ENCODE measurements at regions of chr19 and their contacts with region 1.

Region 1: DNA sequence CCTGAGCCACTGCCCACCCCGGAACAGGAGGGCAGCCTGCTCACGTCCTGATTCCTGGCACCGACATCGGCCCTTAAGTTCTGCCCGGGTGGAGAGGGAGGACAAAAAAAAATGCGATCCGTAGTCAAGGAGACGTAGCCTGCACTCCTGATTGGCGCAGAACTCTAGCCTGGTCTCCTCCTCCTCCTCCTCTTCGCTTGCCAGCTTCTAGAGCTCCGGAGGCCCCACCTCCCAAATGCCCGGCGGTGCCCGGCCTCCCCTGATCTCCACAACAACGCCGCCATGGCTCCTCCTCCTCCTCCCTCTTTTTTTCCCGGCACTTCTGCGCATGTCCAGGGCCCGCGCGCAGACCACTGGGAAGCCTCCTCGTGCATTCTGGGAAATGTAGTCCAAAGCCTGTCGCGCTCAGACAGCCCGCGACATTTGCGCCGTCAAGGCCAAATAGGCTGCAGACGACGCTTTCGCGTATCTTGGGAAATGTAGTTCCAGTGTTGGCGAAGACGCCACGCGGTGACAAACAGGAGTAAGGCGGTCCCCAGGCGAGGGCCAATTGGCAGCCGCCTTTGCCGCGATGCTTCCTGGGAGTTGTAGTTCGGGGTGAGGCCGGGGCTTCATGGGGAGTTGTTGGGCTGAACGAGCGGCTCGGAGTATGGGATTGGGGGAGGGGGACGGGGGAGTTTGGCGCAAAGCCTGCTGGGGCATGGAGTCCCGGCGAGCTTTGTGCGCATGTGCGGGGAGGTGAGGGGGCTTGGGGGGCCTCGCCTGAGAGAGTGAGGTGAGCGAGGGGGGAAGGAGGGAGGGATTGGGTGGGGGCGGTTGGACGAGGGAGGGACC is at the start of gene ZNF444:
- DNase-seq: peak; percentile 93 to 100 (median 100)
- ATAC-seq: peak; percentile 91
- H3K4me3 ChIP-seq: peak within 1 kb of the TSS; percentile 60
- H3K4me3 Mint-ChIP-seq: peak within 1 kb of the TSS; percentile 88 to 97 (median 92)
- H3K27ac ChIP-seq: peak within 1 kb of the TSS; percentile 85
- H3K27ac Mint-ChIP-seq: peak within 1 kb of the TSS; percentile 84 to 98 (median 91)
- H3K4me1 ChIP-seq: peaks cover 4 to 22% of the 10 kb centered on the region in 2 donors
- H3K4me1 Mint-ChIP-seq: peaks cover 27 to 49% (median 43%) of the 10 kb centered on the region in 7 donors
- H3K27me3 ChIP-seq: no peaks in the 10 kb centered on the region
- H3K27me3 Mint-ChIP-seq: peaks cover 0 to 4% (median 0%) of the 10 kb centered on the region in 5 donors
- total RNA-seq, gene ZNF444: 22.2 to 49.6 (median 35.7) TPM

Region 2: DNA sequence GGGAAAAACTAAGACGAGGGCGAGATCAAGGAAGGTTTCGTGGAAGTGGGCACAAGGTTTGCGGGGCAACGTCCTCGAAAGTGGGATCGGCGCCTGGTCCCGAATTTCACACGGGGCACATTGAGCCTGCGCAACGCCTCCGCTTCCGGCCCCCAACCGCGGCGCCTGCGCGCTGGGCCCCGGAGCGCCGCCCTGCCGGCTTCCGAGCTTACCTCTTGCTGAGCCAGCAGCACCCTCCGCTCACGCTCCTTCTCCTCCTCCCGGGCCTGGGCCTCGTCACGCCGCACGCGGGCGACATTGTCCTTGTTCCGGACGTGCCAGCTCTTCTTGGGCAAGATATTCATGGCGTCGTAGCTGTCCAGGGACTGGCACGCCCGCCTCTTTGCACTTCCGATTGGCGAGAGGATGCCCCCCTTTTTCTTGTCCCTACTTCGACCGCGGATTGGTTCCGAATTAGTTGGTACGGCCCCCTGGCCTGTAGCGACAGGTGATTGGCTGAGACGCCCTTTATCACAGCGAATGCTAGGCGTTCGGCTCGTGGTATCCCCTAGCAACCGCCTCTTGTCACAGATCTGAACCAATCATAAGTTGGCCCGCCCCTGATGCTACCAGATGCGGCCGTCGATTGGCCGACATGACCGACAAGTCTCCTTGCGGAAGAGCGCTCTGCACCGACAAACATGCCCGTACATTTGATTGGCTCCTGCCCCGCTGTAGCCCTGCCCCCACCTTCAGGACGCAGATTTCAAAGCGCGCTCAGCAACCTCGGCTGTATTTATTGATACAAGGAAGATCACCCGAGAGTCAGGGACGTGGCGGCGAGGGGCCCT is 1981.2 kb before region 1 on chr19 and contains the start of gene LENG1:
- CTCF ChIA-PET with region 1: no interaction called
- POLR2A ChIA-PET with region 1: no interaction called
- intact Hi-C with region 1: loop called in 1 of 2 experiments (anchors 1 kb)
- DNase-seq: peak; percentile 80 to 100 (median 99)
- ATAC-seq: peak; percentile 91
- H3K4me3 ChIP-seq: peak within 1 kb of the TSS; percentile 78
- H3K4me3 Mint-ChIP-seq: peak within 1 kb of the TSS; percentile 91 to 100 (median 98)
- H3K27ac ChIP-seq: peak within 1 kb of the TSS; percentile 87
- H3K27ac Mint-ChIP-seq: peak within 1 kb of the TSS; percentile 95 to 100 (median 99)
- H3K4me1 ChIP-seq: peaks cover 35 to 53% of the 10 kb centered on the region in 2 donors
- H3K4me1 Mint-ChIP-seq: peaks cover 47 to 88% (median 65%) of the 10 kb centered on the region in 7 donors
- H3K27me3 ChIP-seq: no peaks in the 10 kb centered on the region
- H3K27me3 Mint-ChIP-seq: no peaks in the 10 kb centered on the region
- total RNA-seq, gene LENG1: 7.1 to 20.4 (median 11.8) TPM

Region 3: GRCh38 chr19:55407800-55408532 is 732.8 kb before region 1 on chr19:
- CTCF ChIA-PET with region 1: no interaction called
- POLR2A ChIA-PET with region 1: no interaction called
- intact Hi-C with region 1: loop called in 1 of 2 experiments (anchors 2 kb)
- DNase-seq: peak; percentile 94 to 99 (median 97)
- ATAC-seq: peak; percentile 93
- H3K4me3 ChIP-seq: peak overlapping the region; percentile 89
- H3K4me3 Mint-ChIP-seq: peak overlapping the region; percentile 86 to 97 (median 92)
- H3K27ac ChIP-seq: peak overlapping the region; percentile 96
- H3K27ac Mint-ChIP-seq: peak overlapping the region; percentile 93 to 100 (median 99)
- H3K4me1 ChIP-seq: peaks cover 17 to 24% of the 10 kb centered on the region in 2 donors
- H3K4me1 Mint-ChIP-seq: peaks cover 21 to 36% (median 26%) of the 10 kb centered on the region in 7 donors
- H3K27me3 ChIP-seq: no peaks in the 10 kb centered on the region
- H3K27me3 Mint-ChIP-seq: peaks cover 0 to 12% (median 0%) of the 10 kb centered on the region in 5 donors

Region 4: DNA sequence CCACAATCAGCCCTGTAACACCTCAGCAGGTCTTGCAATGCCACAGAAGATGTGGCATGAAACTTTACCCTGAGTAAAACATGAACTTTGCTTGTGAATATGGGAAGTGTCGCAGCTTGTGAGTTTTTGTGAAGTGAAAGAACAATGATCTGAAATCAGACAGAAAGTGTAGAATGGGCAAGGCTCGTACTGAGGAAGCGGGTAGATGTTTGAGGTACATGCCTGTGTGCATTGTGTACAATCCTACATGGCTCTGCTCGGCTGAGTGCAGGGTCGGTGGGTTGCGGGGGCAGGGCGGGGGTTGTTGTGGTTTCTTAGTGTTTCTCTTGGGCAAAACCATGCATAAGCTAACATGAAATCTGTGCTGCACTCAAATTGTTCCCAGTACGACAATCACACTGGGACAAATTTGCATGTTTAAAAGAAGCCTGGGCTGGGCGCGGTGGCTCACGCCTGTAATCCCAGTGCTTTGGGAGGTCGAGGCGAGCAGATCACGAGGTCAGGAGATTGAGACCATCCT is 209.7 kb before region 1 on chr19:
- CTCF ChIA-PET with region 1: no interaction called
- POLR2A ChIA-PET with region 1: no interaction called
- intact Hi-C with region 1: no loop called
- DNase-seq: no peak
- ATAC-seq: no peak
- H3K4me3 ChIP-seq: no peak overlapping the region
- H3K4me3 Mint-ChIP-seq: no peak overlapping the region
- H3K27ac ChIP-seq: no peak overlapping the region
- H3K27ac Mint-ChIP-seq: no peak overlapping the region
- H3K4me1 ChIP-seq: no peaks in the 10 kb centered on the region
- H3K4me1 Mint-ChIP-seq: no peaks in the 10 kb centered on the region
- H3K27me3 ChIP-seq: no peaks in the 10 kb centered on the region
- H3K27me3 Mint-ChIP-seq: peaks cover 0 to 10% (median 0%) of the 10 kb centered on the region in 5 donors

Region 5: GRCh38 chr19:56105090-56105701 is 35.6 kb before region 1 on chr19:
- CTCF ChIA-PET with region 1: interaction called, 3 read pairs
- POLR2A ChIA-PET with region 1: no interaction called
- intact Hi-C with region 1: loop called (anchors 2 to 5 kb)
- DNase-seq: peak; percentile 39 to 68 (median 55)
- ATAC-seq: peak; percentile 83
- H3K4me3 ChIP-seq: no peak overlapping the region
- H3K4me3 Mint-ChIP-seq: peak overlapping the region in 8 of 10 donors; percentile 26 to 71 (median 60)
- H3K27ac ChIP-seq: no peak overlapping the region
- H3K27ac Mint-ChIP-seq: peak overlapping the region in 4 of 9 donors; percentile 9 to 70 (median 62)
- H3K4me1 ChIP-seq: peaks cover 0 to 5% of the 10 kb centered on the region in 2 donors
- H3K4me1 Mint-ChIP-seq: peaks cover 22 to 49% (median 36%) of the 10 kb centered on the region in 7 donors
- H3K27me3 ChIP-seq: no peaks in the 10 kb centered on the region
- H3K27me3 Mint-ChIP-seq: no peaks in the 10 kb centered on the region

Region 6: DNA sequence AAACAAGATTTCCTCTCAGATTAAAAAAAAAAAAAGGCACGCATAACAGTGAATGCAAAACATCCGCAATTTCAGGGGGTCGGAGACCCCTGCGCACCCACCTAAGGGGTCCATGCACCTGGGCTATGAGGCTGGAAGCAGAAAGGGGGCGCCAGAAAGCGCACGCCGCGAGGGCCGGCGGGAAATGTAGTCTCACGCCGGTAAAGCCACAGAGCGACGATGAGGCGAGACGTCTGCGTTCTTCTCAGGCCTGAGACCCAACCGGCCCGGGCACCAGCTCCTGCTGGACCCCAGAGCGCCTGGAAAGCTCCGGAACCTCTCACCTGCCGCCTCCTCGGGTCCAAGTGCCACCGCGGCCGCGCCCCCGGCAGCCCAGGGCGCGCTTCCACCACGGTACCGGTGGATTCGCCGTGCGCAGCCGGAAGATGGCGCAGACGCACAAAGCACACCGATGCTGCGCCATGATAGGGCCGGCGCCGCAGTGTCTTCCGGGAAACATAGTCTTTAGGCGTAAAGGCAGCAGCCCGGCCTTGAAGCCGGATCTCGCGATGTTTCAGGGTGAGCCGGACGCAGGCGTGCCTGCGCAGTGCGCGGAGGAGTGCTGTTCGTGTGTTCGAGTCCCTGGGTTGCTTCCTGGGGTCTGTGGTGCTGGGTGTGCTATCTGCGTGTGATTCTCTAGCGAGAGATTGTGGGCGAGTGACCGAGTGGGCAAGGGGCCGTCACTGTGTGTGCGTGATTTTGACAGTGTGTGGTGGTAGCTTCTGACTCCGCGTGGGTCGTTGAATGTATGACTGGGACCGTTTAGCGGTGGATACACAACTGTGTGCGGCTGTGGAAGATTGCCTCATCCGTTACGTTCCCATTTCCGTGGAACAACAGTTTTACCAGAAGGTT is 252.6 kb after region 1 on chr19 and contains the start of gene ZNF582:
- CTCF ChIA-PET with region 1: no interaction called
- POLR2A ChIA-PET with region 1: no interaction called
- intact Hi-C with region 1: loop called (anchors 1 to 2 kb)
- DNase-seq: peak; percentile 79 to 94 (median 90)
- ATAC-seq: peak; percentile 98
- H3K4me3 ChIP-seq: peak within 1 kb of the TSS; percentile 90
- H3K4me3 Mint-ChIP-seq: peak within 1 kb of the TSS; percentile 89 to 99 (median 98)
- H3K27ac ChIP-seq: peak within 1 kb of the TSS; percentile 92
- H3K27ac Mint-ChIP-seq: peak within 1 kb of the TSS; percentile 91 to 99 (median 96)
- H3K4me1 ChIP-seq: peaks cover 3 to 5% of the 10 kb centered on the region in 2 donors
- H3K4me1 Mint-ChIP-seq: peaks cover 3 to 32% (median 10%) of the 10 kb centered on the region in 7 donors
- H3K27me3 ChIP-seq: no peaks in the 10 kb centered on the region
- H3K27me3 Mint-ChIP-seq: no peaks in the 10 kb centered on the region
- total RNA-seq, gene ZNF582: 1.7 to 7.6 (median 3.3) TPM

Region 7: GRCh38 chr19:56441206-56441792 is 300.5 kb after region 1 on chr19:
- CTCF ChIA-PET with region 1: no interaction called
- POLR2A ChIA-PET with region 1: no interaction called
- intact Hi-C with region 1: no loop called
- DNase-seq: no peak
- ATAC-seq: no peak
- H3K4me3 ChIP-seq: no peak overlapping the region
- H3K4me3 Mint-ChIP-seq: no peak overlapping the region
- H3K27ac ChIP-seq: no peak overlapping the region
- H3K27ac Mint-ChIP-seq: no peak overlapping the region
- H3K4me1 ChIP-seq: no peaks in the 10 kb centered on the region
- H3K4me1 Mint-ChIP-seq: no peaks in the 10 kb centered on the region
- H3K27me3 ChIP-seq: no peaks in the 10 kb centered on the region
- H3K27me3 Mint-ChIP-seq: no peaks in the 10 kb centered on the region

Region 8: DNA sequence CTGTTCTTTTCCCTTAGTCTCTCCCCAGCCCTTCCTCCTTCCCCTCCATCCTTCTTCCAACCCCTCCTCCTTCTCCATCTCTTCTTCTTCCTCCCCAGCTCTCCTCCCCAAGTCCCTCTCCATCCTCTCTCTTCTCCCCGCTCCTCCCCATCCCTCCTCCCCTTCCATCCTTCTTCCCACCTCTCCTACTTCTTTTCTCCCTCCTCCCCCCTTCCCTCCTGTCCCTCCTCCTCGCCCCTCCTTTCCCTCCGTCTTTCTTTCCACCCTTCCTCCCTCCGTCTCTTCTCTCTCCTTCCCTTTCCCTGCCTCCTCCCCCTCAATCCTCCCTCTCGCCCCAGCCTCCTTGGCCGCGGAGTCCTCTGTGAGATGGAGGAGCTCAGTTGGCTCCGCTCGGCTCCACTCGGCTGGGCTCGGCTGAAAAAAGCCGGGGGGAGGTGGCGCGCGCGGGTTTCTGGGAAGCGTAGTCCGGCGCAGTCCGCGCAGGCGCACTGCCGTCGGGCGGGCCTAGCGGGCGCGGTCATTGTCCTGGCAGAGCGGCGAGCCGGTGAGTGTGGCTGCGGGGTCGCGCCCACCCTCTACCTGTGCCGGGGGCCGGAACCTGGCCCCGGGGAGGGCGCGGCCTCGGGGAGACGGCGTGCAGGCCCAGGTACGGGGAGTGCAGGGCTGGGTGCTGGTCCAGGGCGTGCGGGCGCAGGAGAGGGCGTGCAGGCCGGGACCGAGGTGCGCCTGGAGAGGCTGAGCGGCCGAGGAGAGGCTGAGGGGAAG is 454.2 kb after region 1 on chr19 and contains the start of gene ZNF71:
- CTCF ChIA-PET with region 1: no interaction called
- POLR2A ChIA-PET with region 1: no interaction called
- intact Hi-C with region 1: loop called in 1 of 2 experiments (anchors 2 kb)
- DNase-seq: peak; percentile 75 to 89 (median 81)
- ATAC-seq: peak; percentile 96
- H3K4me3 ChIP-seq: peak within 1 kb of the TSS; percentile 57
- H3K4me3 Mint-ChIP-seq: peak within 1 kb of the TSS; percentile 83 to 99 (median 90)
- H3K27ac ChIP-seq: peak within 1 kb of the TSS; percentile 71
- H3K27ac Mint-ChIP-seq: peak within 1 kb of the TSS; percentile 72 to 94 (median 86)
- H3K4me1 ChIP-seq: peaks cover 0 to 3% of the 10 kb centered on the region in 2 donors
- H3K4me1 Mint-ChIP-seq: peaks cover 19 to 30% (median 21%) of the 10 kb centered on the region in 7 donors
- H3K27me3 ChIP-seq: no peaks in the 10 kb centered on the region
- H3K27me3 Mint-ChIP-seq: no peaks in the 10 kb centered on the region
- total RNA-seq, gene ZNF71: 4.5 to 7.7 (median 6.6) TPM

Region 9: GRCh38 chr19:57016076-57016475 is 875.3 kb after region 1 on chr19:
- CTCF ChIA-PET with region 1: no interaction called
- POLR2A ChIA-PET with region 1: no interaction called
- intact Hi-C with region 1: no loop called
- DNase-seq: no peak
- ATAC-seq: no peak
- H3K4me3 ChIP-seq: no peak overlapping the region
- H3K4me3 Mint-ChIP-seq: no peak overlapping the region
- H3K27ac ChIP-seq: no peak overlapping the region
- H3K27ac Mint-ChIP-seq: no peak overlapping the region
- H3K4me1 ChIP-seq: no peaks in the 10 kb centered on the region
- H3K4me1 Mint-ChIP-seq: peaks cover 0 to 2% (median 0%) of the 10 kb centered on the region in 7 donors
- H3K27me3 ChIP-seq: no peaks in the 10 kb centered on the region
- H3K27me3 Mint-ChIP-seq: peaks cover 0 to 6% (median 0%) of the 10 kb centered on the region in 5 donors